Endothelial cell of umbilical vein (primary cell): ENCODE measurements at regions of chr2 and their contacts with region 1.

Region 1: DNA sequence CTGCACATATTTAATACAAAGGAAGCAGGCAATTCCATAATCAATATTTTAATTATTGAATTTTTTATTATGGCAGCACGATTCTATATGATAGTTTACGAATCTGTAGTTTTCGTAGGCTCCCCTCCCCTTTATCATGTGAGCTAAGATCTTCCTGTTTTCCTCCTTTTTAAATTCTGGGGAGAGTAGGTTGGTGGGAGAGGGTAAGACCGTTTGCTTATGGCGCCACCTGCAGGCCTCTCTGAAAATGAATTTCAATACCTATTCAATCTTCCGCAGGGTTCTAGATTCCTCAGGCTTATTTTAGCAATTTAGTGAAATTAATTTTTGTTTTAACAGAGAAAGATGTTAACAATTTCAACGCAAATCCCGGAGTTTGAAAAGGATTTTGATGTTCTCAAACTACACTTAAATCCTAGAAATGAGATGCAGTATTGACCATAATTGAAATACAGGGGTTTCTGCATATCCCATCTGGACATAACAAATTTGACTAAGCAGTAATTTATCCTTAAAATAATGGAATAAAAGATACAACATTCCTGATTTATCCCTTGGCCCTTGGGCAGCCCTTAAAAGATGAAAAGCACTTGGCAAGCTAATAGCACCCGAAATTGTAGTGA is 12.8 kb upstream of the GBX2 start:
- DNase-seq: peak; percentile 88
- H3K4me3 ChIP-seq: peak overlapping the region in 1 of 3 experiments; percentile 65
- H3K27ac ChIP-seq: peak overlapping the region; percentile 99
- H3K4me1 ChIP-seq: peaks cover 24% of the 10 kb centered on the region
- H3K27me3 ChIP-seq: no peaks in the 10 kb centered on the region
- CTCF ChIP-seq: peak; percentile 61 to 65
- POLR2A ChIP-seq: no peak

Region 2: DNA sequence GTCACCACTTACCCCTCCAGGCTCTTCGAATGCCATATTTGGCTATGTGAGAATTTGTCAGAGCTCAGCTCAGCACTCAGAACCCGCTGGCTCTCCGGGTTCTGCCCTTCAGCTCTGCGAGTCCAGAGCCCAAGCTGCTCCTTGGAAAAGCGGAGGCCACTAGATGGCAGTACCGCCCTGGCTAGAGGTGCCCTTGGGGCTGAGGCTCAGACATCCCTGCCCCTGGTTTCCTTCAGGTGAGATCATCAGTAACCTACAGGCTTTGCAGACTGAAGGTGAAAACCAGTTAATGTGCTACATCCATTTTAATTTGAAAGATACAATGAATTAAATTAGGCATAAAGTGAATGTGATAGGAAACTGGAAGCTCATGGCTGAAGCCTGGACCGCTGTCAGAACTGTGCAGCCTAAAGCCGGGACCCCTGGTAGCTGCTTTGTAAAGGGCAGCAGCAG is 401.5 kb before region 1 on chr2:
- CTCF ChIA-PET with region 1: interaction called, 231 read pairs
- POLR2A ChIA-PET with region 1: no interaction called
- dilution Hi-C with region 1: no loop called
- intact Hi-C with region 1: loop called (anchors 1 kb)
- DNase-seq: peak; percentile 74
- H3K4me3 ChIP-seq: no peak overlapping the region
- H3K27ac ChIP-seq: no peak overlapping the region
- H3K4me1 ChIP-seq: no peaks in the 10 kb centered on the region
- H3K27me3 ChIP-seq: no peaks in the 10 kb centered on the region
- CTCF ChIP-seq: peak; percentile 89 to 90
- POLR2A ChIP-seq: no peak

Region 3: DNA sequence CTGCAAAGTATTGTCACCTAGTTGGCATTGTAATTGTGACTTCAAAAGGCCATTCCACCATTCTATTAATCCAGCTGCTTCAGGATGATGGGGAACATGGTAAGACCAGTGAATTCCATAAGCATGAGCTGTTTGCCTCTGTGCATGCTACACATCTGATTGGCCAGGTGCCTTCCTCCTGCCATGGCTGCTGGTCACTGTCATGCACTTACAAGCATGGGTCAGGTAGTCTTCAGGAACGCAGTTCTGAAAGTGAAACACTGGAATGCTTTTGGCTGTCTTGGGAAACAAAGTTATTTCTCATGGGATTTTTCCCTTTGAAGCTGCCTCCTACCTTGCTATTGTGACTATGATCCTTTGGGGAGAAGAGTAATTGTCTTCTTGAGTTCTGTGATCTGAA is 280.3 kb before region 1 on chr2:
- CTCF ChIA-PET with region 1: no interaction called
- POLR2A ChIA-PET with region 1: no interaction called
- dilution Hi-C with region 1: no loop called
- intact Hi-C with region 1: loop called (anchors 1 kb)
- DNase-seq: peak; percentile 37
- H3K4me3 ChIP-seq: no peak overlapping the region
- H3K27ac ChIP-seq: peak overlapping the region; percentile 43
- H3K4me1 ChIP-seq: peaks cover 23% of the 10 kb centered on the region
- H3K27me3 ChIP-seq: no peaks in the 10 kb centered on the region
- CTCF ChIP-seq: no peak
- POLR2A ChIP-seq: no peak

Region 4: GRCh38 chr2:236049981-236050380 is 131.0 kb before region 1 on chr2:
- CTCF ChIA-PET with region 1: no interaction called
- POLR2A ChIA-PET with region 1: no interaction called
- dilution Hi-C with region 1: no loop called
- intact Hi-C with region 1: no loop called
- DNase-seq: no peak
- H3K4me3 ChIP-seq: no peak overlapping the region
- H3K27ac ChIP-seq: no peak overlapping the region
- H3K4me1 ChIP-seq: no peaks in the 10 kb centered on the region
- H3K27me3 ChIP-seq: no peaks in the 10 kb centered on the region
- CTCF ChIP-seq: no peak
- POLR2A ChIP-seq: no peak

Region 5: DNA sequence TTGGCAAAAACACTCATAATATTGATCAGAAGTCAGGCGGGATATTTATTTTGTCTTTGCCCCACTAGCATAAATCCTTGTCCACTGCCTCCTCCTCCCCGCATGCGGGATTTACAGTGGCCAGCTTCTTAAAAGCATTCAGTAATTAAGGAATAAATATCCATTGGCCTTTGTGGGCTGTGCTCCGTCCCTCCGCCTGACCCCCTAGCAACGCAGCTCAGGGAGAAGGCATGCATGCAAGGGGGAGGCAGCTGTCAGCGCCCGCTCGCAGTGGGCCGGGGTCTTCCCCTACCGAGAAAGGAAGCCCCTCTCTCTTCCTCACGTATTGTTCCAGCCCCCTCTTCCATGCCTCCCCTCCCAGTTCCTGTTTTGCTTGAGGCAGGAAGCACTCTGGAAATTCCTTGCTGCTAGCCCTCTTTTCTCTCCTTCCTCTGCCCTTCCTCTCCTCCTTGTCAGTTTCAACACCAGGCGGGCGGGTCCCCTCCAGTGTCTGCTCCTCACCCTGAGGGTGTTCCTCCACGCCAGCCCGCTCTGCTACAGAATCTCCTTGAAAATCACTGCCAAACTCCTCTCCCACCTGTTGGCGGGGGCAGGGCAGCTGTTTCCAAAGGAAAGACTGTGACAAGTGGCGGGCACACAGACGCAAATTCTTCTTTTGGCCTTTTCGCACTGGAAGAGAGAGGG is 72.9 kb before region 1 on chr2:
- CTCF ChIA-PET with region 1: no interaction called
- POLR2A ChIA-PET with region 1: no interaction called
- dilution Hi-C with region 1: no loop called
- intact Hi-C with region 1: loop called (anchors 5 kb)
- DNase-seq: peak; percentile 58
- H3K4me3 ChIP-seq: no peak overlapping the region
- H3K27ac ChIP-seq: peak overlapping the region; percentile 28
- H3K4me1 ChIP-seq: peaks cover 28% of the 10 kb centered on the region
- H3K27me3 ChIP-seq: no peaks in the 10 kb centered on the region
- CTCF ChIP-seq: no peak
- POLR2A ChIP-seq: no peak

Region 6: DNA sequence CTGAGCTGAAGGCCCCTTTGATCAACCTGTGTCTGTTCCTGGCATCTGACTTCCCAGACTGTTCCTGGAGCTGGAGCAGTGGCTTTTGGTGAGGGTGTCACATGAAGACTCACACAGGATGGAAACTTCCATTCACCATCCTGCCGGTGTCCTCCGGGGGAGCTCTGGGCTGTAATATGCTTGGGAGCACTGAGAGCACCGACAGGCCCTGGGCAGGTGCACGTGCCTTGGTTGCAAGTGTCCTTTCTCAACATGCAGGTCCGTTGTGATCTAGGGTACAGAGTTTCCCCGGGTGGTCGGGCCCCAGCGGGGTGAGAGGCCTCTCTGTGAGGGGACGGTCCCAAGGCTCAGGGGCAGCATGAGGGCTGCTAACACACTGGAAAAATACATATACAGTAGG is 12.1 kb after region 1 on chr2:
- CTCF ChIA-PET with region 1: interaction called, 10 read pairs
- POLR2A ChIA-PET with region 1: no interaction called
- dilution Hi-C with region 1: no loop called
- intact Hi-C with region 1: no loop called
- DNase-seq: no peak
- H3K4me3 ChIP-seq: no peak overlapping the region
- H3K27ac ChIP-seq: no peak overlapping the region
- H3K4me1 ChIP-seq: no peaks in the 10 kb centered on the region
- H3K27me3 ChIP-seq: no peaks in the 10 kb centered on the region
- CTCF ChIP-seq: no peak
- POLR2A ChIP-seq: no peak

Region 7: GRCh38 chr2:236380036-236380612 is 199.2 kb after region 1 on chr2:
- CTCF ChIA-PET with region 1: no interaction called
- POLR2A ChIA-PET with region 1: no interaction called
- dilution Hi-C with region 1: no loop called
- intact Hi-C with region 1: no loop called
- DNase-seq: no peak
- H3K4me3 ChIP-seq: no peak overlapping the region
- H3K27ac ChIP-seq: no peak overlapping the region
- H3K4me1 ChIP-seq: no peaks in the 10 kb centered on the region
- H3K27me3 ChIP-seq: no peaks in the 10 kb centered on the region
- CTCF ChIP-seq: no peak
- POLR2A ChIP-seq: no peak